PC-3 (cell line): ENCODE measurements at regions of chr10 and their contacts with region 1.

Region 1: DNA sequence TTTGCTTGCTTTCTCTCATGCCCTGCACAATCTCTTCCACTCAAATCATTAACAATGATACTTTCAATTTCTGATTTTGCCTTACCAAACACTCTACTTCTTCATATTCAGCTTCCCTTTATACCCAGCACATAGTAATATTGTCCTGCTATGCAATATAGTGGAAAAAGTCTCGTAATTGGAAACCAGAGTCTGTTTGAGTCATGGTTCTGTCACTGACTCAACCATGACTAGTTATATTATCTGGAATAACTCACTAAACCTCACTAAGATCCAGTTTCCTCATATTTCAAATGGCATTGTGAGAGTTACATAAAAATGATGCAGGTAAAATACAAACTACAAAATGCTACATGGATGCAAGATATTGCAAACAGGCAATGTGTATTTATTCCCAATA is 98.5 kb upstream of the LRRTM3 start:
- DNase-seq: peak; percentile 100
- ATAC-seq: peak; percentile 85
- H3K4me3 ChIP-seq: peak overlapping the region; percentile 11
- H3K27ac ChIP-seq: peak overlapping the region; percentile 70
- H3K4me1 ChIP-seq: peaks cover 42% of the 10 kb centered on the region
- H3K27me3 ChIP-seq: no peaks in the 10 kb centered on the region
- CTCF ChIP-seq: no peak

Region 2: DNA sequence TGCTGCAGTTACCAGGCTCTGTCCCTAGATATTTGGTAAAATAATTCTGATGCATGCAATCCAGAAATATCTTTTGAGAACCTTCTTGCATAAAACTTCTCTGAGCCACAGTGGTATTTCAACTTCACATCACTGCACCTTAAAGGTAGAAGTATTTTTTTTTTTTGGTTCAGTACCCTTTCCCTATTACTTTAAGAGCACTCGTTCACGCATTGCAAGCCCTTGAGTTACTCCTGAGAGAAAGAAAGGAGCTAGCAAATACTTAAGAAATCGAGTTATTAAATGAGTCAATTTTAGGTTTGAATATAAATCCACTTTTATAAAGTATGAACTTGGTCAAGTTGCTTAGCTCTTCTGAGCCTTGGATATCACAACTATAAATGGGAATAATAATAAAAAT is 508.6 kb before region 1 on chr10:
- CTCF ChIA-PET with region 1: no interaction called
- POLR2A ChIA-PET with region 1: no interaction called
- intact Hi-C with region 1: no loop called
- DNase-seq: no peak
- ATAC-seq: no peak
- H3K4me3 ChIP-seq: no peak overlapping the region
- H3K27ac ChIP-seq: no peak overlapping the region
- H3K4me1 ChIP-seq: peaks cover 20% of the 10 kb centered on the region
- H3K27me3 ChIP-seq: no peaks in the 10 kb centered on the region
- CTCF ChIP-seq: no peak

Region 3: DNA sequence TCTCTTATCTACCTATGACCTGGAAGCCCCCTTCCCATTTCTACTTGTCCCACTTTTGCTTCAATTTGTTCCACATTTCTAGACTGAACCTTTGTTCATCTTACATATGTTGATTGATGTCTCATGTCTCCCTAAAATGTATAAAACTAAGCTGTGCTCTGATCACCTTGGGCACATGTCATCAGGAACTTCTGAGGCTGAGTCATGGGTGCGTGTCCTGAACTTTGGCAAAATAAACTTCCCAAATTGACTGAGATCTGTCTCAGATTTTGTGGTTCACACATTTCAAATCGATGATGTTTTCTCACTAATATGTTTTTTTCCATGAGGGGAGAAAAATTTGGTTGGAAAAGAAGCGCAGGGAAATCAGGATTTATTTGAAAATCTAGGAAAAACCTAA is 307.7 kb before region 1 on chr10:
- CTCF ChIA-PET with region 1: no interaction called
- POLR2A ChIA-PET with region 1: interaction called, 3 read pairs
- intact Hi-C with region 1: loop called (anchors 5 kb)
- DNase-seq: peak; percentile 97
- ATAC-seq: peak; percentile 70
- H3K4me3 ChIP-seq: no peak overlapping the region
- H3K27ac ChIP-seq: peak overlapping the region; percentile 29
- H3K4me1 ChIP-seq: peaks cover 24% of the 10 kb centered on the region
- H3K27me3 ChIP-seq: no peaks in the 10 kb centered on the region
- CTCF ChIP-seq: no peak

Region 4: GRCh38 chr10:66747451-66747850 is 79.9 kb before region 1 on chr10:
- CTCF ChIA-PET with region 1: interaction called, 3 read pairs
- POLR2A ChIA-PET with region 1: no interaction called
- intact Hi-C with region 1: loop called (anchors 2 kb)
- DNase-seq: peak; percentile 100
- ATAC-seq: peak; percentile 89
- H3K4me3 ChIP-seq: no peak overlapping the region
- H3K27ac ChIP-seq: peak overlapping the region; percentile 68
- H3K4me1 ChIP-seq: peaks cover 26% of the 10 kb centered on the region
- H3K27me3 ChIP-seq: no peaks in the 10 kb centered on the region
- CTCF ChIP-seq: no peak

Region 5: DNA sequence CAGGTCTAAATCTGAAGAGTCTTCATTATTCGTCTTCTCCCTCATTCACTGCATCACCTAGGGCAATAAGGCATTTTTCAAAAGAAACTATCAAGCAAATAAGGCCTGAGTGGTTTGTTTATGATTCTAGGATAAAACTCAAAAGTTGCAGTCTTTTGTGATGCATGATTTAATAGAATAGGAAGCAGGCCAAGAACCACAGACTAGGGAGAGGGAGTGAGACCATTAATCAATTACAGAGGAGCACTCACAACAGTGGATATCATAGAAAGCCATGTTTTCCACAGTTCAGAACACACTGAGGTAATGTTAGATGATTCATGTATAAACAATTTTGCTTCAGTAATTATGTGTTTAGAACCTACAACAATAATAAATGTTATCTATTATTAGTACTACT is 10.6 kb after region 1 on chr10:
- CTCF ChIA-PET with region 1: no interaction called
- POLR2A ChIA-PET with region 1: interaction called, 11 read pairs
- intact Hi-C with region 1: no loop called
- DNase-seq: peak; percentile 53
- ATAC-seq: no peak; the same call in 1 of the 2 replicates
- H3K4me3 ChIP-seq: no peak overlapping the region
- H3K27ac ChIP-seq: no peak overlapping the region
- H3K4me1 ChIP-seq: peaks cover 51% of the 10 kb centered on the region
- H3K27me3 ChIP-seq: no peaks in the 10 kb centered on the region
- CTCF ChIP-seq: no peak

Region 6: DNA sequence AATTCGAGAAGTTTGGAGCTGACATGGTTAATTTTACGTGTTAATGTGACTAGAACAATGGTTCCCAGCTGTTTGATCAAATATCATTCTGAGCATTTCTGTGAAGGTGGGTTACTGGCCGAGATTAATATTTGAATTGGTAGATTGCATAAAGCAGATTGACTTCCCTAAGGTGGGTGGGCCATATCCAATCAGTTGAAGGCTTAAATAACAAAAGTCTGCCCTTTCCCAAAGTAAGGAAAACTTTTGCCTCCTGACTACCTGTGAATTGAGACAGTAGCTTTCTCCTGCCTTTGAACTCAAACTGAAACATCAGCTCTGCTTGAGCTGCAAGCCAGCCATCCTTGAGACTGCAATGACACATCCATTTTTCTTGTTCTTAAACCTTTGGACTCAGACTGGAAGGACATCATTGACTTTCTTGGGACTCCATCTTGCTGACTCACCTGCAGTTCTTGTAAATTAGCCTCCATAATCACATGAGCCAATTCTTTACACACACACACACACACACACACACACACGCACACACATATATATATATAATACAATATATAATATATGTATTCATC is 35.4 kb after region 1 on chr10:
- CTCF ChIA-PET with region 1: no interaction called
- POLR2A ChIA-PET with region 1: no interaction called
- intact Hi-C with region 1: loop called (anchors 2 kb)
- DNase-seq: no peak
- ATAC-seq: no peak
- H3K4me3 ChIP-seq: no peak overlapping the region
- H3K27ac ChIP-seq: no peak overlapping the region
- H3K4me1 ChIP-seq: peaks cover 13% of the 10 kb centered on the region
- H3K27me3 ChIP-seq: no peaks in the 10 kb centered on the region
- CTCF ChIP-seq: no peak